Activated CD8-positive, alpha-beta memory T cell treated with anti-CD3 and anti-CD28 coated beads, Interleukin-2, amount 10 ng/mL, durations not matched to agents 7 days and 5 days (primary cell): ENCODE measurements at regions of chr7 and their contacts with region 1.

Region 1: DNA sequence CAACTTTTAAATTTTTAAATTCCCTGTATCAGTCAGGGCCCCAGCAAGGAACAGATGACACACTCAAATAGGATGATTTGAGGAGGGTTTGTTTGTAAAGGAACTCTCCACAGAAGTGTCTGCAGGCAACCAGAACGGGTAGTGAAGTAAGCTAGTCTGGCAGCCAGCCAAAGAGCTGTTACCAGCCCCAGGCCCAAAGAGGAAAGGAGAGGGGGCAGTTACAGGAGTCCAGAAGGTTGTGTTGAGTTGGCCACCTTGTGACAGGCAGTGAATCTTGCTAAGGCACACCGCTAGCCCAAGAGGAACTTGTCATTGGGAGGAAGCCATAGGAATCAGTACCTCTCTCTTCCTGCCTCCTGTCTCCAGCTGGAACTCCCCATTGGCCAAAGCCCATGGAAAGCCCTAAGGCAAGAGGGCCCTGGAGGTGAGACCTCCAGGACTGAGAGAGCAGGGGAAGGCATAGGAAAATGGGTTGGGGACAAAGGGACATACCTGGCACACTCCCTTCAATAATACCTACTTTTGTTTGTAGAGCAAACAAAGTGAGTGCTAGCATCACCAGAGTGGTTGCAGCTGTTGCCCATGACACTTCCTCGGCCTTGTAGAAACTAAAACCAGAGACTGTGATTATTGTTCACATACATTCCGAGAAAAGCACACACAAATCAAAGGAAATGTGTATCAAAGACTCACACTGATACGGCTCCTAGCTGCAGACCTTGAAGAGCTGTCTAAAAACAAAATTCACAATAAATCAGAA is 25.4 kb upstream of the GATAD1 start:
- DNase-seq: no peak
- ATAC-seq: no peak
- H3K4me3 Mint-ChIP-seq: no peak overlapping the region
- H3K27ac Mint-ChIP-seq: no peak overlapping the region
- H3K4me1 Mint-ChIP-seq: peaks cover 32% of the 10 kb centered on the region
- H3K27me3 Mint-ChIP-seq: peaks cover 9% of the 10 kb centered on the region

Region 2: DNA sequence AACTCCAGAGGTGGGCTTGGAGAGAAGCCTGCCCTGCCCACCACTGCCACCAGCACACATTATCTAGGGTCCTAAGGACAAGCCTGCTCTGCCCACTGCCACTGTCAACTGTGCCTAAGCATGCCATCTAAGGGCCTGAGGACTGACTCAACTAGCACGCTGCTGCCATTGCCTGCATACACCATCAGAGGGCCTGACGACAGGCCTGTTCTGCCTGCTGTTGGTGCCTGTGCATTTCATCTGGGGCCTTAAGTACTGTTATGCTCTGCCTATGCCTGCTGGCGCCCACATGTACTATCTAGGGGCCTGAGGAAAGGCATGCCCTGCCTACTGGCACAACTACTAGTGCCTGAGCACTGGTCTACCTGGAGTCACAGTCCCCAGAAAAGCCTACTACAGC is 215.8 kb before region 1 on chr7:
- CTCF ChIA-PET with region 1: no interaction called
- DNase-seq: no peak
- ATAC-seq: no peak
- H3K4me3 Mint-ChIP-seq: no peak overlapping the region
- H3K27ac Mint-ChIP-seq: no peak overlapping the region
- H3K4me1 Mint-ChIP-seq: peaks cover 9% of the 10 kb centered on the region
- H3K27me3 Mint-ChIP-seq: no peaks in the 10 kb centered on the region

Region 3: GRCh38 chr7:92404170-92404614 is 17.7 kb before region 1 on chr7:
- CTCF ChIA-PET with region 1: interaction called, 12 read pairs
- DNase-seq: peak; percentile 84
- ATAC-seq: peak; percentile 81
- H3K4me3 Mint-ChIP-seq: peak overlapping the region; percentile 48
- H3K27ac Mint-ChIP-seq: peak overlapping the region; percentile 79
- H3K4me1 Mint-ChIP-seq: peaks cover 20% of the 10 kb centered on the region
- H3K27me3 Mint-ChIP-seq: peaks cover 3% of the 10 kb centered on the region